Calu3 (cell line): ENCODE measurements at regions of chr10 and their contacts with region 1.

Region 1: DNA sequence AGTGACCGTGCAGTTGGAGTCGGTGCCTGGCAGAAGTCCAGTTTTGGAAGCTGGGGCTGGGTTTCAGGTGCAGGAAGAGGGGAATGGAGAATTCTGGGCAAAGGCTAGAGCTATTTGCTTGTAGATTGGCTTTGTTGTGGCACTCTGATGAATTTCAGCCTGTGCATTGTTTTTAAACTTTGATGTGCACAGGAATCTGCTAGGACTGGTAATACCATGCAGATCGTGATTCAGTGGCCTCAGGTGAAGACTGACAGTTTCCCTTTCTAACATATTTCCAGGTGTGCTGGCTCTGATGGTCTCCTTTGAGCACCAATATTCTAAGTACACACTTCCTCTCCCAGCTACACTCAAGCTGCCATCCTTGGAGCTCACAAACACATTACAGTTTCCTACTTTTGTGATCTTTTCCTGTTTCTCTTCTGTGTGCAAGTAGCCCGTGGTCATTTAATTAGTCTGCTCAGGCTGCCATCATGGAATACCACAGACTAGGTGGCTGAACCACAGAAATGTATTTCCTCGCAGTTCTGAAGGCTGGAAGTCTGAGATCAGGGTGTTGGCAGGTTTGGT is 55.6 kb downstream of the NOC3L start:
- DNase-seq: no peak
- H3K4me3 Mint-ChIP-seq: no peak overlapping the region
- H3K27ac Mint-ChIP-seq: no peak overlapping the region
- H3K4me1 Mint-ChIP-seq: no peaks in the 10 kb centered on the region
- H3K27me3 Mint-ChIP-seq: peaks cover 42% of the 10 kb centered on the region
- CTCF ChIP-seq: no peak

Region 2: DNA sequence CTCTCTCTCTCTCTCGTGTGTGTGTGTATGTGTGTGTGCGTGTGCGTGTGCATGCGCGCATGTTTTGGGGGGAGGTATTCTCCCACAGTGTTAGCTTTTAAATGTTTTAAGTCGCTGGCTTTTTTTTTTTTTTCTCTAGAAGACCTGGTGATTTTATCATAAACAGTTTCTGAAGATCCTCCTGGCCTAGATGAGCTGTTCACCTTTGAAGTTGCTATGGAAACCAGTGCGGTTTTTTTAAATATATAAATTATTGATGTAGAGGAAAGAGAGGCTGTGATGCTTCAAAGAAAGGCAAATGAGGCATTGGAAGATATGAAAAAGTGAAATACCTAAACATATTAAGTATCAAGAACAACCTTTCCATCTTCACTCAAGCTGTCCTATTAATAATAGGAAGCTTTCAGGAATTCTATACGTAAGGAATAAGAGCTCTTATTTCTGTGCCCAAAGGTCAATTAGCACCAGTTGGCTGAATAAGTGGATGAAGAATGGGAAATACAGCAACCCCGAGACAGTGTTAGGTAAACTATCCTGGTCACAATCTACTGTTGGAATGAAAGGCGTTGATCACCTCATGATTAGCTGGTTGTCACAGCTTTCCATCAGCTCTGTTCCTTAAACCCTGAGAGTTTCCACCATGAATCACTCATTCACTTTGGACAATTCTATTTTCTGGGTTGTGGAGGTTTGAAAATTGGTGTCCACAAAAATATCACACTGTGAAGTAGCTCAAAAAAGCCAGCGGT is 479.9 kb before region 1 on chr10:
- CTCF ChIA-PET with region 1: interaction called, 10 read pairs
- intact Hi-C with region 1: no loop called
- DNase-seq: no peak
- H3K4me3 Mint-ChIP-seq: no peak overlapping the region
- H3K27ac Mint-ChIP-seq: no peak overlapping the region
- H3K4me1 Mint-ChIP-seq: no peaks in the 10 kb centered on the region
- H3K27me3 Mint-ChIP-seq: peaks cover 41% of the 10 kb centered on the region
- CTCF ChIP-seq: no peak

Region 3: GRCh38 chr10:94274142-94274787 is 32.9 kb before region 1 on chr10:
- CTCF ChIA-PET with region 1: no interaction called
- intact Hi-C with region 1: no loop called
- DNase-seq: no peak
- H3K4me3 Mint-ChIP-seq: no peak overlapping the region
- H3K27ac Mint-ChIP-seq: no peak overlapping the region
- H3K4me1 Mint-ChIP-seq: no peaks in the 10 kb centered on the region
- H3K27me3 Mint-ChIP-seq: no peaks in the 10 kb centered on the region
- CTCF ChIP-seq: no peak

Region 4: DNA sequence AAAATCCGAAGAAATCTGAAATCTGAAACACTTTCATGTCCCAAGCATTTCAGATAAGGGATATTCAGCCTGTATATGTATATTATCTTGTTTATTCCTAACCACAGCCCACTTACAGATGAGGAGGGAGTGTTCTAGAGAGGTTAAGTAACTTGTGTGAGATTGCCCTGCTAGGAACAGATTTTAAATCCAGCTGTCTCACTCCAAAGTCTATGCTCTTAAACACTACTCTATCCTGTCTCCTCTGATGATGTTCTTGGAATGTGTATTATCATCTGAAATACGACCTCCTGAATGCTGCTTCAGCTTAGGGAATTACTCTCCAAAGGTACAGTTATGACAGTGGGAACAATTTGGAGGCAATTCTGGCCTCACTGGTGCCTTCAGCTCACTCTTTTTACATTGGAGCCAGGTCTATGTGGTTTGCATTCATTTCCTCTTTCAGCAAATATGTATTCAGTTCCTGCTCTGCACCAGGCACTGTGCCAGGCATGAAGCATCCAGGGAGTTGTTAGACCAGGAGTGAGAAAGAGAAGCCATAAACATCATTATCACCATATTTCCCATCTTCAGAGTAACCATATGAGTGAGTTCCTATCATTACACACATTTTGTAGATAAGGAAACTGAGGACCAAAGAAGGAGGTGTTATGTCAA is 14.6 kb before region 1 on chr10:
- CTCF ChIA-PET with region 1: no interaction called
- intact Hi-C with region 1: no loop called
- DNase-seq: peak; percentile 14
- H3K4me3 Mint-ChIP-seq: no peak overlapping the region
- H3K27ac Mint-ChIP-seq: no peak overlapping the region
- H3K4me1 Mint-ChIP-seq: no peaks in the 10 kb centered on the region
- H3K27me3 Mint-ChIP-seq: peaks cover 35% of the 10 kb centered on the region
- CTCF ChIP-seq: no peak

Region 5: GRCh38 chr10:94450782-94451181 is 143.7 kb after region 1 on chr10:
- CTCF ChIA-PET with region 1: no interaction called
- intact Hi-C with region 1: no loop called
- DNase-seq: no peak
- H3K4me3 Mint-ChIP-seq: no peak overlapping the region
- H3K27ac Mint-ChIP-seq: no peak overlapping the region
- H3K4me1 Mint-ChIP-seq: no peaks in the 10 kb centered on the region
- H3K27me3 Mint-ChIP-seq: no peaks in the 10 kb centered on the region
- CTCF ChIP-seq: no peak